Breast epithelium (tissue), 4 donors: ENCODE measurements at regions of chr4 and their contacts with region 1.

Region 1: DNA sequence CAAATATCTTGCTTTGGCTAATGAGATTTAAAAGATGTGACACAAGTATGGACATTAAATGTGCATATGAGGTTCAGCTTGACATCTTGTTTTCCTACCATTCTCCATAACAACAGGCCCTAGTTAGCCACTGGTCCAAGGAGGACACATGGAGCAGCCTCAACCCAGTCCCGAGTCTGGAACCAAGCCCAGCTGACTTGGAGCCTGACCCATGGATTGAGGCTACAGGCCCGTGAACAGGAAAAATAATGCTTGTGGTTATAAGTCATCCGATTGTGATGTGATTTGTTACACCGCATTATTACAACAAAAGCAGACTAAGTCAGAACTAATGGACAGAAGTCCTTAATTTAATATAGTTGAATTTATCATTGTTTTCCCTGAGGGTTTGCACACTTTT is 123.2 kb upstream of the BANK1 start:
- DNase-seq: no peak
- H3K4me3 ChIP-seq: no peak overlapping the region
- H3K27ac ChIP-seq: no peak overlapping the region
- H3K4me1 ChIP-seq: no peaks in the 10 kb centered on the region
- H3K27me3 ChIP-seq: no peaks in the 10 kb centered on the region
- CTCF ChIP-seq: no peak
- POLR2A ChIP-seq: no peak

Region 2: DNA sequence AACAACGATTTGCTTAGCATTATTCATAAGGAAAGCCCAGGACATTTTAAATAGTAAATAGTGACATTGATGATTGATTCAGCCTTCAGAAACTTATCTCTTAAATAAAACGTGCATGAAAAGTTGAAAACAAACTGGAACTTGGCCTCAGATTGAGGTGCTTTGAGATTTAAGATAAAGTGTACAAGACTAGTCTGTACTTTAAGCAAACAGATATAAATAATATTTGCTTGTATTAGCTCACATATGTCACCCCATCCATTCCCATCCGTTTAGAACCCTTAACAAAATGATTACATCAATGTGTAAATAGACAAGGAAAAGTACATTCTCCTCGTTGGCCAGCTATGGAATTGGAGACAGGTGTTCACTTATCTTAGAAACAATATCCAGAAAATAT is 254.0 kb after region 1 on chr4:
- intact Hi-C with region 1: loop called (anchors 5 kb)
- DNase-seq: no peak
- H3K4me3 ChIP-seq: no peak overlapping the region
- H3K27ac ChIP-seq: no peak overlapping the region
- H3K4me1 ChIP-seq: no peaks in the 10 kb centered on the region
- H3K27me3 ChIP-seq: no peaks in the 10 kb centered on the region
- CTCF ChIP-seq: no peak
- POLR2A ChIP-seq: no peak

Region 3: DNA sequence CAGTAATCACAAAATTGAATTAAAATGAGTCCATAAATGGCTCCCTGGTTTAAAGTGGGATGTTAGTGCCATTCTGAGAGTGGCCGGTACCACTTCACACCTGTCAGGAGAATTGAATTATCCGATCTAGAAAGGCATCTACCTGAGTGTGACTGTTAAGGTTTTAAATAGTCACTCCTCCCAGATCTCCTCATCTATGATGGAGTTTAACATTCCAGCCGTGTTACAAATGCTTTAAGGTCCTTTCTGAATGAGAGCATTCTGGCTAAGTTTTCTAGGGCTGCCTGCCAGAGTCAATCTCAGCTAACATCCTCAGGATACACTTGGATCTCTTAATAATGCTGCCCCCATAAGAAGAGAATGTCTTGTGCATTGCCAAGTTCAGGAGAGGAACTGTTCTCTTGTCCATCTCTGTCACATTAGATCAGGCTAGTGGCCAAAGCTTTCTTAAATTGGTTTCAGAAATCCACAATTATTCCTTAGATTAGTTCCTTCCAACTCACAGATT is 446.8 kb after region 1 on chr4:
- intact Hi-C with region 1: no loop called
- DNase-seq: no peak
- H3K4me3 ChIP-seq: no peak overlapping the region
- H3K27ac ChIP-seq: no peak overlapping the region
- H3K4me1 ChIP-seq: no peaks in the 10 kb centered on the region
- H3K27me3 ChIP-seq: no peaks in the 10 kb centered on the region
- CTCF ChIP-seq: no peak
- POLR2A ChIP-seq: no peak